Heart right ventricle (tissue), 16 donors: ENCODE measurements at regions of chr9 and their contacts with region 1.

Region 1: GRCh38 chr9:86948074-86948929 is 996 bp upstream of the GAS1 start:
- DNase-seq: peak; percentile 78 to 81
- ATAC-seq: peak; percentile 53 to 93 (median 83)
- H3K4me3 ChIP-seq: peak overlapping the region; percentile 65 to 96 (median 85)
- H3K27ac ChIP-seq: peak overlapping the region; percentile 53 to 97 (median 92)
- H3K4me1 ChIP-seq: peaks cover 0 to 37% (median 12%) of the 10 kb centered on the region in 9 donors
- H3K27me3 ChIP-seq: peaks cover 0 to 27% (median 0%) of the 10 kb centered on the region in 7 donors
- CTCF ChIP-seq: peak; percentile 81 to 90 (median 86)

Region 2: DNA sequence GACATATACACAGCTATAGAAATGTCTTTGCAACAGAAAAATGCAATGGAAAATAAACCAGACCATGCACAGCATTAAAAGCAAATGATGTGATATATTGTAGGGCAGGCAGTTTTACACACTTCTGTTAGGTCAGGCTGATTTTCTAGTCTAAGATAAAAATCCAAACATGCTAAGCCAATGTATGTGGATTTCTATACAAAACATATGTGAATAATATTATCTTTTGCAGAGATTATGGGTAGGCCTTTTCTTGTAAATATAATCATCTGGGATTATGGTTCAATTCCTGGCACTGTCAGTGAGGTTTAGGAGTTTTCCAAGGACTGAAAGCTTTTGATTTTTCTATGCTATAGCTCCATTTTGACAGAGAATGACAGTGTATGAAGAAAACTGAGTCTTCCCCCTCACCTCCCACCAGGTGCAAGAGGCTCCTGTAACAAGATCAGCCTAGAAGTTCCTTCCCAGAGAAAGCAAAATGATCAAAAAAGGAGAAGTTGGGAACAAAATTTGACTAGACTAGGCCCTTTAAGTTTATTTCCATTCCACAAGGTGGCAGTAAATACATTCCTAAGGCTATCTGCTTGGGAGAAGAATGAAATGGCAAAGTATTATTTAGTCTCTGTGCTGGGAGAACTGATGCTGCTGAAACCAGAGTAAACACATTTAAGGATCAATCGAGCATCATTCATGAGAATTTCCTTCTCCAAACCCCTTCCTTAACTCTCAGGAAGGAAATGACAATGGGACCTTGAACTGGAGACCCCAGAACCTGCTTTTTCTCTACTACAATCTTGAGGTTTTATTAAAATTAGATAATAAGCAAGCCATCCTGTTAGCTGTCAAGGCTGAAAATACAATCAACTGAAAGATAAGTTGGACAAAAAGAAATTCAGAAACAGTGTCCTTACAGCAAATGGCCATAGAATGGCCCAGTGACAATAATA is 461.1 kb before region 1 on chr9:
- intact Hi-C with region 1: loop called in 5 of 10 experiments (anchors 5 to 10 kb)
- DNase-seq: no peak
- ATAC-seq: peak in 7 of 8 donors; percentile 55 to 80 (median 73)
- H3K4me3 ChIP-seq: no peak overlapping the region
- H3K27ac ChIP-seq: no peak overlapping the region
- H3K4me1 ChIP-seq: peaks cover 0 to 6% (median 0%) of the 10 kb centered on the region in 9 donors
- H3K27me3 ChIP-seq: peaks cover 0 to 4% (median 0%) of the 10 kb centered on the region in 7 donors
- CTCF ChIP-seq: peak; percentile 44 to 79 (median 69)

Region 3: GRCh38 chr9:86732514-86733171 is 215.7 kb before region 1 on chr9:
- intact Hi-C with region 1: loop called in 2 of 10 experiments (anchors 2 to 10 kb)
- DNase-seq: no peak
- ATAC-seq: peak; percentile 49 to 83 (median 61)
- H3K4me3 ChIP-seq: no peak overlapping the region
- H3K27ac ChIP-seq: peak overlapping the region in 9 of 10 donors; percentile 20 to 67 (median 57)
- H3K4me1 ChIP-seq: peaks cover 0 to 24% (median 0%) of the 10 kb centered on the region in 9 donors
- H3K27me3 ChIP-seq: no peaks in the 10 kb centered on the region
- CTCF ChIP-seq: no peak

Region 4: GRCh38 chr9:86792134-86792533 is 156.2 kb before region 1 on chr9:
- intact Hi-C with region 1: no loop called
- DNase-seq: no peak
- ATAC-seq: no peak
- H3K4me3 ChIP-seq: no peak overlapping the region
- H3K27ac ChIP-seq: no peak overlapping the region
- H3K4me1 ChIP-seq: peaks cover 0 to 9% (median 0%) of the 10 kb centered on the region in 9 donors
- H3K27me3 ChIP-seq: peaks cover 0 to 9% (median 5%) of the 10 kb centered on the region in 7 donors
- CTCF ChIP-seq: no peak

Region 5: GRCh38 chr9:87148331-87149104 is 200.2 kb after region 1 on chr9:
- intact Hi-C with region 1: loop called in 2 of 10 experiments (anchors 5 kb)
- DNase-seq: peak; percentile 88
- ATAC-seq: peak; percentile 95 to 97 (median 96)
- H3K4me3 ChIP-seq: peak overlapping the region; percentile 6 to 57 (median 44)
- H3K27ac ChIP-seq: peak overlapping the region; percentile 73 to 89 (median 81)
- H3K4me1 ChIP-seq: peaks cover 0 to 21% (median 15%) of the 10 kb centered on the region in 9 donors
- H3K27me3 ChIP-seq: peaks cover 0 to 15% (median 0%) of the 10 kb centered on the region in 7 donors
- CTCF ChIP-seq: peak in 6 of 9 donors; percentile 11 to 52 (median 33)

Region 6: GRCh38 chr9:87267251-87268070 is 319.2 kb after region 1 on chr9:
- intact Hi-C with region 1: loop called in 1 of 10 experiments (anchors 5 kb)
- DNase-seq: peak; percentile 47 to 52
- ATAC-seq: peak; percentile 72 to 85 (median 81)
- H3K4me3 ChIP-seq: no peak overlapping the region
- H3K27ac ChIP-seq: peak overlapping the region in 8 of 10 donors; percentile 33 to 68 (median 53)
- H3K4me1 ChIP-seq: peaks cover 0 to 38% (median 22%) of the 10 kb centered on the region in 9 donors
- H3K27me3 ChIP-seq: peaks cover 0 to 3% (median 0%) of the 10 kb centered on the region in 7 donors
- CTCF ChIP-seq: no peak